Right ventricle myocardium inferior (tissue), 1 donor: ENCODE measurements at regions of chr6 and their contacts with region 1.

Region 1: DNA sequence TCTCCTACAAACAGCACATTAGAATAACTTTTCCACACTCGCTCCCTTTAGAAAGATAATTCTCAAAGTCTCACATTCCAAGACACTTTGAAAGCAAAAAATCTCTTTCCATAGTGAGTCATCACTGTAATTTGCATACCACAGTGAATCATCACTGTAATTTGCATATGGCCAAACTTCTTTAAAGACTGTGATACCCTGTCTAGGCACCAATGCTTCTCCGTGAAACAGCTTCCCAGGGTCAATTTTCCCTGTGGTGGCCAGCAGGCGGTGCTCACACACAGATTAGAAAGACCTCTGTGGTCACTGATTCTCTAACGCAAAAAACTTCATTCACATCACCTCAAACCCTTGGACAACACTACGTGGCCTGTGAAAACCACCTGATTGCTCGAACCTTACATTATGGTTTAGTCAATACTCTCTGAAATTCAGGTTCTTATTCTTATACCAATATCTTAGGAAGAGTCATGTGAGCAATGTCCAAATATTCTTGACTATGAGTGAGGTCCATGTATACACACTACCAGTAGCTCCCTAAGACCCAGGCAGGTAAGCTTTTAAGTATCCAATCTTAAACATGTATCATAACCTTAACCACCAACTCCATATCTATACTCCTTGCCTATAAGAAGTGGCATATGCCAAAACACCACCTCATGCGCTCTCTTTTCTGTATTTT is 78.5 kb upstream of the PHACTR1 start:
- DNase-seq: peak; percentile 60
- ATAC-seq: no peak

Region 2: GRCh38 chr6:11043961-11044711 is 1594.0 kb before region 1 on chr6 and contains the start of gene ELOVL2:
- intact Hi-C with region 1: no loop called
- DNase-seq: peak; percentile 68
- ATAC-seq: peak; percentile 87
- total RNA-seq, gene ELOVL2: 2.4 TPM

Region 3: DNA sequence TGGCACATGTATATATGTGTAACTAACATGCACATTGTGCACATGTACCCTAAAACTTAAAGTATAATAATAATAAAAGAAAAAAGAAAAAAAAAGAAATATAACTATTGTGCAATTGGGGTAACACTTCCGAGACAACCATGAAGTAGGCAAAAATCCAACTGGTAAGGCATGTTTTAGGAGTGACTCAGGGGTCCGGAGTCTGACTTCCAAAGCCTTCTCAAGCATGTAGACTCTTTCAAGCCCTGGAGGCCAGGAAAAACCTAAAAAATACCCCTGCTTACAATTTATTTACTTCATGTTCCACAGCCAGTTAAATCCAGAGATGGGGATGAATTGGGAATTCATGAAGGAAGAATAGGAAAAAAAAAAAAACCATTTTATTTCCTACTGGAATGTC is 82.8 kb before region 1 on chr6:
- intact Hi-C with region 1: no loop called
- DNase-seq: no peak
- ATAC-seq: no peak

Region 4: DNA sequence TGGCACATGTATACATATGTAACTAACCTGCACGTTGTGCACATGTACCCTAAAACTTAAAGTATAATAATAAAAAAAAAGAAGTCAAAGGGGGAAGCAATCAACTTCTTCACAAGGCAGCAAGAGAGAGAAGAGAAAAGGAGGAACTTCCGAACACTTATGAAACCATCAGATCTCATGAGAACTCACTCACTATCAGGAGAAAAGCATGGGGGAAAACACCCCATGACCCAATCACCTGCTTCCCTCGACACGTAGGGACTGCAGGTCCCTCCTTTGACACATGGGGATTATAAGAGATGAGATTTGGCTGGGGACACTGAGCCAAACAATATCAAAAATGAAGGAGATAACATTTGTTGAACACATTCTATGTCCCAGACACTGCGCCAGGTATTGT is 16.3 kb before region 1 on chr6:
- intact Hi-C with region 1: no loop called
- DNase-seq: no peak
- ATAC-seq: no peak

Region 5: DNA sequence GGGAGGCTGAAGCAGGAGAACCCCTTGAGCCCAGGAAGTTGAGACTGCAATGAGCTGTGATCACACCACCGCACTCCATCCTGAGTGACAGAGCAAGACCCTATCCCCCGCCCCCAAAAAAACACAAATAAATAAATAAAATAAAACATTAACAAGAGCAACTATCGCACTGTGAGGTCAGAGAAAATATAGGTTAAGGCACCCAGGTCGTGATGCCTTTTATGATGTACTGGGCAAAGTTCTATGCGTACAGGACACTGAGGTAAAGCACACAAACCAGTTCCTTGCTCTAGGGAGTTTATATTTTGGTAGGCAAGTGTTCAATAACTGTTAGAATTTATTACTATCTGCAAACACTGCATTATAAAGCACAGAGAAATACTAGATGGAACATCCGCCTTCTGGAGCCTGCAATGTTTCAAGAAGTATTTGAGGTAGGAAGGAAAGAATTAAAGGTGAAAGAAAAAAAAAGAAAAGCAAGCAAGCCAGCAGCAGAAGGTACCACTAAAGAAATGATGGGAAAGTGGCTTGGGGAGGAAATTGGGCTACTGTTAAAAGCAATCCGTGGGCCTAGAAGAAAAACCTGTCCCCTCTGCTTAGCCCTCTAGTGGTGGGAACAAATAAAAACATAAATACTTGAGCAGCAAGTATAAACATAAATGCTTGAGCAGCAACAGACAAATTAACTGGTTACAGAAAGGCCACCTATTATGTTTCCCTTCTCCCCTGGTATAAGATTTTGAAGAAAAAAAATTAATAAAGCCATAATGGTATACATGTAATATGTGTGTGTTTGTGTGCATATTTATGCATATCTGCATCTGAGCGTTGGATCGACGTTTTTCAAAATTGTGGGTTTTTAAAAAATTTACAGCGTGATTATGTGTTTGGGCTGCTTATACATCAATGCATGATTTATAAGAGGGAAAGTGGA is 206.5 kb after region 1 on chr6:
- intact Hi-C with region 1: loop called (anchors 2 kb)
- DNase-seq: no peak
- ATAC-seq: no peak

Region 6: GRCh38 chr6:12890171-12890790 is 252.2 kb after region 1 on chr6:
- intact Hi-C with region 1: loop called (anchors 2 kb)
- DNase-seq: no peak
- ATAC-seq: no peak